Activated CD4-positive, alpha-beta T cell treated with anti-CD3 and anti-CD28 coated beads for 36 hours (primary cell): ENCODE measurements at regions of chr10 and their contacts with region 1.

Region 1: DNA sequence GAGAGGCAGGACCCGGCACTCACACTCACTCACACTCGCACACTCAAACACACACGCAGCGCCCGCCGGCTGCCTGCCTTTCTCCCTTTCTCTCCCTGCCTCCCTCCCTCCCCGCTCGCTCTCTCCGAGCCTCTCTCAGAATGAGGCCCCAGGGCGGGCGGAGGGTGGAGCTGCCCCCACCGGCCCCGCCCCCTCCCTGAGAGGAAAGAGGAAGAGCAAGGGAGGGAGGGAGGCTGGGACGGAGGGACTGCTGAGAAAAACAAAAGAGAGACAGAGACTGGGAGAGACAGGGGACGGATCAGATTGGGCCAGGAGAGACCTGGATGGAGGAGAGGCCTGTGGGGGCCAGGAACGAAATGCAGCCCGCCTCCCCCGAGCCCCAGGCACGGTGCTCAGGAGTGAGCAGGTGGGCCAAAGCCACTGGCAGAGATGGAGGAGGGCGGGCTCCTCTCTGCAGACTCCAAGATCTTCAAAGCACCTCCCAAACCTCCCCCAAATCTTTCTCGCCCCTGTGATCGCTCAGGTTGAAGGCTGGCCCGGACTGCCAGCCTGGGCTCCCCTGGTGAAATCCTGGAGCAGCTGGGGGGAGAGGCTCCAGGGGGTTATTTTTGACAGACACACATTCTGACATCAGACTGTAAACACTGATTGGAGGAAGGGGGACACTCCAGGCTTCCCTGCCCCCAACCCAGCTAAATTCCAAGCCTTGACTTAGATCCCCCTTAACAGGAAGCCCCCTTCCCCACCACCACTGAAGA is 5.1 kb downstream of the LDB1 start:
- DNase-seq: peak; percentile 95
- ATAC-seq: peak; percentile 60
- H3K4me3 Mint-ChIP-seq: peak overlapping the region; percentile 81
- H3K27ac Mint-ChIP-seq: peak overlapping the region; percentile 97
- H3K4me1 Mint-ChIP-seq: peaks cover 55% of the 10 kb centered on the region
- H3K27me3 Mint-ChIP-seq: no peaks in the 10 kb centered on the region

Region 2: DNA sequence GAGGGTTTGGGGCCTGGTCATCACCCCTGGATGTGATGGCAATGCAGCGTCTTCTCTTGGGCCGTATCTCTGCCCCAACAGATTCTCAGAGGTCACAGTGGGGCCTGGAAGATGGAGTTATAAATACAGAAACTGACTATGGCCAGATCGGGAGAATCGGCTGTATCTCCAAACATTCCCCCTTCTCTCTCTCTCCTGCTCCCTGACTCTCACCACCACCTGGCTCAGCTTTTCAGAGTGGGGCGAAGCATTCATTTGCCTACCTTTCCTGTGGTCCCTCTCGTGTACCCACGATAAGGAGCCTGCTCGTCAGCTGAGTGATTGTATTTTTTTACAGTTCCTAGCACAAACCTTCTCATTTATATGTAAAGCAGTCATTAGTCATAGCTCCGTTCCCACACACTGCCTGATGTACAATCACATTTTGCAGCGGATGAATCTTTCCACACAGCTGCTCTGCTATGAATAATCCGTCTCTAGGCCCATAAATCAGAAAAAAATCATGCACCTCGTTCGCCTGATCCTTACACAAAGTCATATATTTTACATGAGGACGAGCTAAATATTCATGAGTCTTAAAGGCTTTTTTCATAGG is 784.3 kb before region 1 on chr10:
- CTCF ChIA-PET with region 1: no interaction called
- POLR2A ChIA-PET with region 1: no interaction called
- intact Hi-C with region 1: no loop called
- DNase-seq: no peak
- ATAC-seq: no peak
- H3K4me3 Mint-ChIP-seq: no peak overlapping the region
- H3K27ac Mint-ChIP-seq: no peak overlapping the region
- H3K4me1 Mint-ChIP-seq: no peaks in the 10 kb centered on the region
- H3K27me3 Mint-ChIP-seq: peaks cover 10% of the 10 kb centered on the region

Region 3: GRCh38 chr10:101693978-101694673 is 420.9 kb before region 1 on chr10:
- CTCF ChIA-PET with region 1: no interaction called
- POLR2A ChIA-PET with region 1: no interaction called
- intact Hi-C with region 1: loop called in 1 of 2 experiments (anchors 10 kb)
- DNase-seq: peak; percentile 80
- ATAC-seq: peak; percentile 76
- H3K4me3 Mint-ChIP-seq: peak overlapping the region; percentile 88
- H3K27ac Mint-ChIP-seq: peak overlapping the region; percentile 97
- H3K4me1 Mint-ChIP-seq: peaks cover 43% of the 10 kb centered on the region
- H3K27me3 Mint-ChIP-seq: no peaks in the 10 kb centered on the region

Region 4: GRCh38 chr10:101830322-101831168 is 284.5 kb before region 1 on chr10:
- CTCF ChIA-PET with region 1: interaction called, 3 read pairs
- POLR2A ChIA-PET with region 1: no interaction called
- intact Hi-C with region 1: loop called (anchors 2 to 5 kb)
- DNase-seq: peak; percentile 96
- ATAC-seq: peak; percentile 77
- H3K4me3 Mint-ChIP-seq: peak overlapping the region; percentile 70
- H3K27ac Mint-ChIP-seq: peak overlapping the region; percentile 98
- H3K4me1 Mint-ChIP-seq: peaks cover 56% of the 10 kb centered on the region
- H3K27me3 Mint-ChIP-seq: no peaks in the 10 kb centered on the region

Region 5: DNA sequence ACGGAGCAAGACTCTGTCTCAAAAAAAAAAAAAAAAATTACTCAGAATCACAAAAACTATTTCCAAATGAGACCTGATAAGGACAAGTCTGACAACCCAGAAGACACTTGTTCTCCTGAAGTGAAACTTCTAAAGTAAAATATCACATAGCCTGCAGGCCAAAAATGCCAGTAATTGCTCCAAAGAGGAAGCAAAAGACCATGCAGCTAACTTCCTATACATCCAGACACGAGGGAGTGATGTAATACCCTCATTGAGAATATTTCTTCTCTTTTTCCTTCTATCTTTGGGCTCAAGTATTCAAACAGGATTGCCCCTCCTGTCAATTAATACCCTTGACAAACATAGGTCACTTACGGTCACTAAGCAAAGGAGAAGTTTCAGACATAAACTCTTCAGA is 90.2 kb before region 1 on chr10:
- CTCF ChIA-PET with region 1: no interaction called
- POLR2A ChIA-PET with region 1: no interaction called
- intact Hi-C with region 1: no loop called
- DNase-seq: no peak
- ATAC-seq: no peak
- H3K4me3 Mint-ChIP-seq: no peak overlapping the region
- H3K27ac Mint-ChIP-seq: no peak overlapping the region
- H3K4me1 Mint-ChIP-seq: peaks cover 2% of the 10 kb centered on the region
- H3K27me3 Mint-ChIP-seq: no peaks in the 10 kb centered on the region

Region 6: DNA sequence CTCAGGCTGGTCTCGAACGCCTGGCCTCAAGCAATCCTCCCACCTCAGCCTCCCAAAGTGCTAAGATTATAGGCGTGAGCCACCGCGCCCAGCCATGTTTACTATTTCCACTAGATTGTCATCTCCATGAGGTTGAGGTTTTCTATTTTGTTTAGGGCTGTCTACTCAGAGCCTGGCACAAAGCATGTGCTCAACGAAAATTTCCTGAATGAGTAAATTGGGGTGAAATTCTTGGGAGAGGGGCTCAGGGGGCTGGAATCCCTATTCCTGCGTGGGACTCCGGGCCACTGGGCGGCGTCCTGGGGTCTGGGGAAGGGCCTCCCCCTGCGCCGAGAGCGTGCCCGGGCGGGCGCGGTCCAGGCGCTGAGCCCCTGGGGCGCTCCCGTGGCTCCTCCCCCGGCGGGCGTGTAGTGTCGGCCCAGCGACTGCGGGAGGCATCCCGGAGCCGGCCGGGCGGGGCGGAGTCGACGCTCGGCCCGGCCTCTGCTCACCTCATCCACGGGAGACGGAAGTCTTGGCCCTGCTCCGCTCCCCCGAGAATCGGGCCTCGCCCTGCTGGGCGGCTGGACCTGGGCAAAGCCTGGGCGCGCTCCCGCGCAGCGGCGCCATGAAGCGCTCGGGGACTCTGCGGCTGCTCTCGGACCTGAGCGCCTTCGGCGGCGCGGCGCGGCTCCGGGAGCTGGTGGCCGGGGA is 50.0 kb before region 1 on chr10 and contains the start of gene HPS6:
- CTCF ChIA-PET with region 1: no interaction called
- POLR2A ChIA-PET with region 1: no interaction called
- intact Hi-C with region 1: loop called (anchors 1 to 2 kb)
- DNase-seq: peak; percentile 94
- ATAC-seq: peak; percentile 99
- H3K4me3 Mint-ChIP-seq: peak within 1 kb of the TSS; percentile 79
- H3K27ac Mint-ChIP-seq: peak within 1 kb of the TSS; percentile 88
- H3K4me1 Mint-ChIP-seq: peaks cover 22% of the 10 kb centered on the region
- H3K27me3 Mint-ChIP-seq: no peaks in the 10 kb centered on the region
- total RNA-seq, gene HPS6: 12.9 to 18.9 TPM

Region 7: DNA sequence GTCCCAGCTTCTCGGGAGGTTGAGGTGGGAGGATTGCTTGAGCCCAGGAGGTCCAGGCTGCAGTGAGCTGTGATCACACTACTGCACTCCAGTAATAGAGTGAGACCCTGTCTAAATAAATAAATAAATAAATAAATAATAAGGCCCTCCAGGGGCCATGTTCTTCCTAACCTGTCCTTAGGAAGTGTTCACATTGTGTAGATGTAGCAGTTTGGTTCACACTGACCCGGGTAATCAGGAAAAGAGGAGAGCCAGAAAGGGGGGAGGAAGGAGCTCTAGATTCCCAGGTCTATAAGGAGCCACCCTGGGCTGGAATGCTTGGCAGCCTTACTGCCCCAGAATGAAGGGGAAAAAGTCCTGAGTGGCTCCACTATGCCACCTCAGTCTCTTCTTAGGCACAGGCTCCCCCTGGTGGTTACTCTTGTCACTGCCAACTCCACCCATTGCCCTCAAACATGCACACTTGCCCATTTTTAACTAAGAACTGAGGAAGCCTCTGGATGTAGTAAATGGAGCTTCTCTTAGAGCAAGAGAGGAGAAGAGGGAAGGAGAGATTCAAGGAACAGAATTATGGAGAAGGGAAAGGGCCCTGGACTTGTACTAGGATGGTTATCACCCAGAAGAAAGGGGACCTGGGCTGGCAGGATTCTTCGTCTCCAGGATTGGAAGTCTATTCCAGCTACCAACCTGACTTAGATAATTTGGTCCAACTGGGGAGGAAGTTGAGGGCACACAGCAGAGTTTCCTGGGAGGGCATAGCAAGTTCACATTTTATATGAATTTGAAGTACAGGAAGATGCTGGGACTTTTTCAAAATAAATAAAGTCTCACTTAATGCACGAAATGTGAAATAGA is 42.1 kb before region 1 on chr10:
- CTCF ChIA-PET with region 1: interaction called, 10 read pairs
- POLR2A ChIA-PET with region 1: no interaction called
- intact Hi-C with region 1: no loop called
- DNase-seq: peak; percentile 89
- ATAC-seq: peak; percentile 97
- H3K4me3 Mint-ChIP-seq: no peak overlapping the region
- H3K27ac Mint-ChIP-seq: no peak overlapping the region
- H3K4me1 Mint-ChIP-seq: peaks cover 2% of the 10 kb centered on the region
- H3K27me3 Mint-ChIP-seq: no peaks in the 10 kb centered on the region

Region 8: DNA sequence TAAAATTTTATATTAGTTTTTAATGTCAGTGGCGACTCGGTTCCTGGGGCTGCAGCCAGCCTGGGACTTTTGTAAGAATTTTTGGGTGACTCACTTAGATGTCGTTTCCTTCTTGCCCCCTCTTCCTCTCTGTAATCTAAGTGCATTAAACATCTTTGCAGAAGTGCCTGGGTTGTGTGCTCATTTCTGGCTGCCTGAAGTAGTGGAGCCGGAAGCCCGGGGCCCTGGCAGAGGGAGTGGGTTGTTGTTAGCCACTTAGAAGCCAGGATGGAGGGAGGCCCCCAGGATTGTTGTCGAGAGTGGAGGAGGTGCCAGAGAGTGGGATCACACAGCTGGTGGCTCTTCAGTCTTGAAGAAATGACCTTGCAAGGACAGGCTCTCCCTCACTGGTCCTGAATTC is 518.3 kb after region 1 on chr10:
- CTCF ChIA-PET with region 1: no interaction called
- POLR2A ChIA-PET with region 1: no interaction called
- intact Hi-C with region 1: no loop called
- DNase-seq: peak; percentile 77
- ATAC-seq: peak; percentile 87
- H3K4me3 Mint-ChIP-seq: no peak overlapping the region
- H3K27ac Mint-ChIP-seq: peak overlapping the region; percentile 86
- H3K4me1 Mint-ChIP-seq: peaks cover 53% of the 10 kb centered on the region
- H3K27me3 Mint-ChIP-seq: no peaks in the 10 kb centered on the region